ENCODE measurements at regions of chr5 and their contacts with region 1.

Region 1: GRCh38 chr5:181223058-181223728 is at the start of gene TRIM41:
- DNase-seq: peak; percentile 100
- ATAC-seq: peak; percentile 95
- H3K4me3 ChIP-seq: peak within 1 kb of the TSS; percentile 60 to 66
- H3K27ac ChIP-seq: peak within 1 kb of the TSS; percentile 71 to 85
- H3K4me1 ChIP-seq: no peaks in the 10 kb centered on the region
- H3K27me3 ChIP-seq: no peaks in the 10 kb centered on the region
- total RNA-seq, gene TRIM41: 15.2 to 21.4 TPM

Region 2: GRCh38 chr5:181207214-181208107 is 15.7 kb before region 1 on chr5:
- intact Hi-C with region 1: loop called in 1 of 2 experiments (anchors 1 kb)
- DNase-seq: peak; percentile 77 to 94
- ATAC-seq: peak; percentile 84
- H3K4me3 ChIP-seq: peak overlapping the region; percentile 16 to 36
- H3K27ac ChIP-seq: peak overlapping the region in 1 of 2 donors; percentile 48
- H3K4me1 ChIP-seq: no peaks in the 10 kb centered on the region
- H3K27me3 ChIP-seq: no peaks in the 10 kb centered on the region

Region 3: GRCh38 chr5:181243512-181244343 is 20.5 kb after region 1 on chr5 and contains the start of gene RACK1:
- intact Hi-C with region 1: loop called in 1 of 2 experiments (anchors 1 kb)
- DNase-seq: peak; percentile 92 to 96
- ATAC-seq: peak; percentile 86
- H3K4me3 ChIP-seq: peak within 1 kb of the TSS; percentile 57 to 76
- H3K27ac ChIP-seq: peak within 1 kb of the TSS; percentile 7 to 78
- H3K4me1 ChIP-seq: no peaks in the 10 kb centered on the region
- H3K27me3 ChIP-seq: no peaks in the 10 kb centered on the region
- total RNA-seq, gene RACK1: 922 to 1,191 TPM

Measured in aorta (tissue), 5 donors.